Posterior vena cava (tissue), 2 donors: ENCODE measurements at regions of chr6 and their contacts with region 1.

Region 1: DNA sequence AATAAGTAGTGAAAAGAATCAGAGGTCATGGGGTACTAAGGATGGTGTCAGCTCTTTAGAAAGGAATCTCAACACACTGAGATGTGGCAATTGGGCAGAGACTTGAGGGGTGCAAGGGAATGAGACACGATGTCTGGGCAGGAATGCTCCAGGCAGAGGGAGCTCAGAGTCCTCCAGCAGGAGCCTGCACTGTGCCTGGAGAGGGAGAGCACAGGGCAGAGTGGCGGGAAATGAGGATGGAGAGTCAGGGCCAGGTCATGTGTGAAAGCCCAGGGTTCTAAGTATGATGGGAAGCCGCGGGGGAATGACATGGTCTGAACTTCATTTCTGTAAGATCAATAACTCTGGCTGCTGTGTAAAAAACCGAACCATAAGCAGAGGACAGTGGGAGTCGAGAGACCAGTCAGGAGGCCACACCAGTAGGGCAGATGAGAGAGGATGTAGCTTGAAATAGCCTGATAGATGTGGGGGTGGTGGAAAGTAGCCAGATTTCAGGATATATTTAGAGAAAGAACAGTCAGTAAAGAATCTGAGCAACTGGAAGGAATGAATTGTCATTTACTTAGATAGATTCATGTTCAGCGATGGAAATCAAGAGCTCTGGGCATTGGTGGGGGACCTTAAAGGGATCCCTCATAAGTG is 133.4 kb upstream of the DTNBP1 start:
- DNase-seq: no peak

Region 2: GRCh38 chr6:15832841-15833240 is 36.6 kb after region 1 on chr6:
- intact Hi-C with region 1: no loop called
- DNase-seq: no peak

Region 3: GRCh38 chr6:17149571-17149970 is 1353.3 kb after region 1 on chr6:
- intact Hi-C with region 1: loop called in 1 of 2 experiments (anchors 5 kb)
- DNase-seq: no peak